ENCODE measurements at regions of chr15 and their contacts with region 1.

Region 1: GRCh38 chr15:56464893-56465520 is at the start of gene MNS1:
- DNase-seq: peak; percentile 84
- ATAC-seq: peak; percentile 95
- H3K4me3 Mint-ChIP-seq: peak within 1 kb of the TSS; percentile 92
- H3K27ac Mint-ChIP-seq: peak within 1 kb of the TSS; percentile 97
- H3K4me1 Mint-ChIP-seq: peaks cover 21% of the 10 kb centered on the region
- H3K27me3 Mint-ChIP-seq: no peaks in the 10 kb centered on the region
- CTCF ChIP-seq: no peak
- total RNA-seq, gene MNS1: 0.62 and 0.66 TPM in 2 replicates

Region 2: DNA sequence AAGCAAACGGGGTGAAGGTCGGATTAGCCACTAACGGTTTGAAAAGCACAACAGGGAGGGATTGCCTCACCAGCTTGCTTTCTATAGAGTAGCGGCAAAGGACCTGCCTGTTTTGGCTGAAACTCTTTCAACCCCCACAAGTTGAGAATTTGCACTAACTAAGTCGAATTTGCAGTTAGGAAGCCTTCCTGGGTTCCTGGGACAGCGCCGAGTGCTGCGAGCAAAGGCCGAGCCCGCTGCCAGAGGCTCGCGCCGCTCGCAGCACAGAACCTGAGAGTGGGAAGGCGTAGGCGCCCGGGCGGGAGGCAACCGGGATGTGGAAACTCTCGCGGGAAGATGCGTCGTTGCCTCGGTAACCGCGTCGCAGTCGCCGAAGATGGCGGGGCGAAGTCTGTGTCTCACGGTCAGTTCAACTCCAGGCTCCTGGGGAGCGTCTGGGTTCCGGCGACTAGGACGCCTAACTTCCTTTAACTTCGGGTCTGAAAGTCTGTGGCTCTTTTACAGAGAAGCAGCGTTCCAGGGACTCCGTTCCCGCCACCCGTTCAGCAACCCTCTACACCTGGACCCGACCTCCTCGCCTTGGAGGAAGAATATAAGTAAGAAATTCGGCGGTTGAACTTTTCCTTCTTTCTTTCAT is 99.8 kb before region 1 on chr15 and contains the start of gene TEX9:
- CTCF ChIA-PET with region 1: no interaction called
- POLR2A ChIA-PET with region 1: no interaction called
- intact Hi-C with region 1: loop called (anchors 2 kb)
- DNase-seq: peak; percentile 73
- ATAC-seq: peak; percentile 92
- H3K4me3 Mint-ChIP-seq: peak within 1 kb of the TSS; percentile 95
- H3K27ac Mint-ChIP-seq: peak within 1 kb of the TSS; percentile 77
- H3K4me1 Mint-ChIP-seq: peaks cover 32% of the 10 kb centered on the region
- H3K27me3 Mint-ChIP-seq: peaks cover 3% of the 10 kb centered on the region
- CTCF ChIP-seq: no peak
- total RNA-seq, gene TEX9: 29.7 and 31.3 TPM in 2 replicates

Region 3: DNA sequence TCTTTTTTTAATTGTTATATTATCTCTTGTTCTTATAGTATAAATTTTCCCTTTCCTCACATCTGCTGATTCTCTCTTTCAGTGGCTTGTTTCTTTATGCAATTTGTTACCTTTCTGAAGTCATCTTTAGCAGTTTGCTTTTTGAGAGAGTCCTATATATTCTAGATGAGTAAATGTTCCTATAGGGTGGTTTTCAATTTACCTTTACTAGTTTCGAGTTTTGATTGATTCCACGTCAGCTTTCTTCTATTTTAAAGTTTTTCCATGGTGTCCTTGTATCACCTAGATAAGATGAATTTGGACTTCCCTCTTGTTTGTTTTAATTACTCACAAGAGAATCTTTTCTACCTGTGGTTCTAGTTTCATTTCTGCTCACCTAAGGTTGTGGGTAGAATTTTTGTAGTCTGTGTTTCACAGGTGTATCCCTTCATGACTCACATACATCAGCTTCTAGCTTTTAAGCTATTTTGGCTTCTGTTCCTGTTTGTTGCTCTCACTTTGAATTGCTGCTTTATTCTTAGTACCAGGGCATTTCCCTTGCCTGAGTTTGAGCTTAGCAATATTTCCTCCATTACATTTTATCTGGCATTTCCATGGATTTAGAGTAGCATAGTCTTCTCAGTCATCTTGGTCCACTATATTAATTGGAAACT is 93.4 kb before region 1 on chr15:
- CTCF ChIA-PET with region 1: no interaction called
- POLR2A ChIA-PET with region 1: no interaction called
- intact Hi-C with region 1: loop called (anchors 2 kb)
- DNase-seq: no peak
- ATAC-seq: peak; percentile 81
- H3K4me3 Mint-ChIP-seq: peak overlapping the region; percentile 52
- H3K27ac Mint-ChIP-seq: peak overlapping the region; percentile 81
- H3K4me1 Mint-ChIP-seq: peaks cover 45% of the 10 kb centered on the region
- H3K27me3 Mint-ChIP-seq: no peaks in the 10 kb centered on the region
- CTCF ChIP-seq: no peak

Region 4: DNA sequence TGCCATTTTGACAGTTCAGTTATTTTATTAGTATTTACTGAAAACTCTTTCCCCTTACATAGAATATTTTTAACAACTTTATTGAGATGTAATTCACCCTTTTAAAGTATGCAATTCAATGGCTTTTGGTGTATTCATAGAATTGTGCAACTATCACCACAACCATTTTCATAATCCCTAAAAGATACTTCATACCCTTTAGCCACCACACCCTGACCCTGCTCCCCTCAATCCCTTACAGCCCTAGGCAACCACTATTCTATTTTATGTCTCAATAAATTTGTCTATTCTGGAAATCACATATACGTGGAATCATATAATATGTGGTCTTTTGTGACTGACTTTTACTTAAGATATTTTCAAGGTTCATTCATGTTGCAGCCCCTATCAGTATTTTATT is 70.1 kb before region 1 on chr15:
- CTCF ChIA-PET with region 1: no interaction called
- POLR2A ChIA-PET with region 1: no interaction called
- intact Hi-C with region 1: no loop called
- DNase-seq: no peak
- ATAC-seq: no peak
- H3K4me3 Mint-ChIP-seq: no peak overlapping the region
- H3K27ac Mint-ChIP-seq: no peak overlapping the region
- H3K4me1 Mint-ChIP-seq: peaks cover 2% of the 10 kb centered on the region
- H3K27me3 Mint-ChIP-seq: no peaks in the 10 kb centered on the region
- CTCF ChIP-seq: no peak

Region 5: GRCh38 chr15:56608140-56608778 is 143.3 kb after region 1 on chr15:
- CTCF ChIA-PET with region 1: no interaction called
- POLR2A ChIA-PET with region 1: no interaction called
- intact Hi-C with region 1: loop called (anchors 5 kb)
- DNase-seq: no peak
- ATAC-seq: peak; percentile 73
- H3K4me3 Mint-ChIP-seq: peak overlapping the region; percentile 9
- H3K27ac Mint-ChIP-seq: peak overlapping the region; percentile 51
- H3K4me1 Mint-ChIP-seq: peaks cover 39% of the 10 kb centered on the region
- H3K27me3 Mint-ChIP-seq: peaks cover 3% of the 10 kb centered on the region
- CTCF ChIP-seq: no peak

Region 6: DNA sequence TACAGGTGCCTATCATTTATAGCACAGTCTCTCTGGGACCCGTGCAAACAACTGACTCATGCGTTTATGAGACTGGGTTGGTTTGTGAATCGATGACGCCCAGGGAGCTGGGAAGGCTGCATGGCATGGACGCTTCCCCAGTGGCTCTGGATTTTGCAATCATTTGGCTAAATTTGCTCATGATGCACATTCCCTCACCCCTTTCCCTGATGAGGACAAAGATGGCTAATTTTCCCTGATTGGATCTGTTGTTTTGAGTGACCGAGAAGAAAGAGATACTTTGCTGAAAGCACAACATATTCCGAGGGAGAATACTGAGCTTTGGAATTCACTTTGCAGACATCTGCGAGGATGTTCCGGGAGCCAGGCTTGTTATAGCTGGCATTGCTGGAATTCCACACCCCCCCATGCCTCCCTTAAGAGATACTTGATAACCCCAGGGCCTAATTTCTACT is 962.4 kb after region 1 on chr15:
- CTCF ChIA-PET with region 1: no interaction called
- POLR2A ChIA-PET with region 1: no interaction called
- intact Hi-C with region 1: no loop called
- DNase-seq: no peak
- ATAC-seq: no peak
- H3K4me3 Mint-ChIP-seq: no peak overlapping the region
- H3K27ac Mint-ChIP-seq: no peak overlapping the region
- H3K4me1 Mint-ChIP-seq: no peaks in the 10 kb centered on the region
- H3K27me3 Mint-ChIP-seq: peaks cover 7% of the 10 kb centered on the region
- CTCF ChIP-seq: no peak

Region 7: GRCh38 chr15:57706405-57707209 is 1241.6 kb after region 1 on chr15 and contains the start of gene POLR2M:
- CTCF ChIA-PET with region 1: no interaction called
- POLR2A ChIA-PET with region 1: interaction called, 3 read pairs
- intact Hi-C with region 1: loop called (anchors 10 kb)
- DNase-seq: peak; percentile 71
- ATAC-seq: peak; percentile 92
- H3K4me3 Mint-ChIP-seq: peak within 1 kb of the TSS; percentile 87
- H3K27ac Mint-ChIP-seq: peak within 1 kb of the TSS; percentile 88
- H3K4me1 Mint-ChIP-seq: peaks cover 36% of the 10 kb centered on the region
- H3K27me3 Mint-ChIP-seq: peaks cover 6% of the 10 kb centered on the region
- CTCF ChIP-seq: no peak
- total RNA-seq, gene POLR2M: 53.8 and 65.2 TPM in 2 replicates

Measured in activated B cell treated with CpG ODN at 0.5 μM for 24 hours (primary cell).